IMR-90 (cell line): ENCODE measurements at regions of chr7 and their contacts with region 1.

Region 1: GRCh38 chr7:43582503-43583423 is at the start of gene STK17A:
- DNase-seq: peak; percentile 85
- ATAC-seq: peak; percentile 94
- H3K4me3 ChIP-seq: peak within 1 kb of the TSS; percentile 91
- H3K27ac ChIP-seq: peak within 1 kb of the TSS; percentile 78
- H3K4me1 ChIP-seq: no peaks in the 10 kb centered on the region; the same call in 1 of the 2 replicates
- H3K27me3 ChIP-seq: peaks cover 2% of the 10 kb centered on the region; the same call in 1 of the 2 replicates
- CTCF ChIP-seq: peak; percentile 100
- POLR2A ChIP-seq: peak; percentile 99
- RAD21 ChIP-seq: peak; percentile 97
- total RNA-seq, gene STK17A: 50.5 and 81.9 TPM in 2 replicates

Region 2: DNA sequence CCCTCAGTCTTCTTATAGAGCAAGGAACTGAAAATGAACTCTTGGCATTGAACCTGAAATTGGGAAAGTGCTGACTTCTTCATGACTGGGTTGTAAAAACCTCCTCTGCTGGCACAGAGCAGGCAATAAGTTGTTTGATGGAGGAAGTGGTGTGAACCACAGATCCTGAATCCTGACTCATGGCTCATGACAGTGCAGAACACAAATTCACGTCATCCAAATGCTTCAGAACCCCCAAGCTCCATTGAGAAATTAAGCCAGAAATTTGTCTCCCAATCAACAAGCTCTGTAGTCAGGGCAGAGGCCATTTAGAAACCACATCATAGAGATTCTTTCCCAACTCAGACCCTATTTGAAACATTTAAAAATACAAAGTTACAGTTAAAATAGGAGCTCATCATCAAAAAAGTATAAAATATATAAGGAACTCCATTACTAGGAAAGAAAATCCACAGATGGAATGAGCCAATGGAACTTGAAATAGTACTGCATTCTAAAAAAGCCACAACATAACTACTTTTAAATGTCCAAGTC is 10.2 kb before region 1 on chr7:
- CTCF ChIA-PET with region 1: interaction called, 41 read pairs
- POLR2A ChIA-PET with region 1: interaction called, 6 read pairs
- dilution Hi-C with region 1: no loop called
- in situ Hi-C with region 1: no loop called
- intact Hi-C with region 1: no loop called
- DNase-seq: peak; percentile 100
- ATAC-seq: peak; percentile 80
- H3K4me3 ChIP-seq: no peak overlapping the region
- H3K27ac ChIP-seq: peak overlapping the region; percentile 83; the same call in 1 of the 2 replicates
- H3K4me1 ChIP-seq: peaks cover 9% of the 10 kb centered on the region
- H3K27me3 ChIP-seq: no peaks in the 10 kb centered on the region
- CTCF ChIP-seq: no peak
- POLR2A ChIP-seq: no peak
- RAD21 ChIP-seq: peak; percentile 4; the same call in 1 of the 2 replicates

Region 3: GRCh38 chr7:43612599-43613589 is 30.1 kb after region 1 on chr7:
- CTCF ChIA-PET with region 1: interaction called, 12 read pairs
- POLR2A ChIA-PET with region 1: interaction called, 11 read pairs
- dilution Hi-C with region 1: no loop called
- in situ Hi-C with region 1: no loop called
- intact Hi-C with region 1: no loop called
- DNase-seq: peak; percentile 61
- ATAC-seq: peak; percentile 60
- H3K4me3 ChIP-seq: no peak overlapping the region
- H3K27ac ChIP-seq: no peak overlapping the region
- H3K4me1 ChIP-seq: peaks cover 15% of the 10 kb centered on the region
- H3K27me3 ChIP-seq: no peaks in the 10 kb centered on the region
- CTCF ChIP-seq: no peak
- POLR2A ChIP-seq: no peak
- RAD21 ChIP-seq: no peak

Region 4: GRCh38 chr7:43639858-43640491 is 57.2 kb after region 1 on chr7:
- CTCF ChIA-PET with region 1: interaction called, 12 read pairs
- POLR2A ChIA-PET with region 1: interaction called, 3 read pairs
- dilution Hi-C with region 1: no loop called
- in situ Hi-C with region 1: no loop called
- intact Hi-C with region 1: no loop called
- DNase-seq: peak; percentile 75
- ATAC-seq: peak; percentile 58
- H3K4me3 ChIP-seq: no peak overlapping the region
- H3K27ac ChIP-seq: peak overlapping the region; percentile 81; the same call in 1 of the 2 replicates
- H3K4me1 ChIP-seq: peaks cover 24% of the 10 kb centered on the region
- H3K27me3 ChIP-seq: no peaks in the 10 kb centered on the region
- CTCF ChIP-seq: no peak
- POLR2A ChIP-seq: no peak
- RAD21 ChIP-seq: no peak

Region 5: GRCh38 chr7:43693687-43694398 is 111.1 kb after region 1 on chr7:
- CTCF ChIA-PET with region 1: interaction called, 104 read pairs
- POLR2A ChIA-PET with region 1: interaction called, 23 read pairs
- dilution Hi-C with region 1: no loop called
- in situ Hi-C with region 1: no loop called
- intact Hi-C with region 1: no loop called
- DNase-seq: peak; percentile 81
- ATAC-seq: peak; percentile 43
- H3K4me3 ChIP-seq: no peak overlapping the region
- H3K27ac ChIP-seq: peak overlapping the region; percentile 61
- H3K4me1 ChIP-seq: peaks cover 19% of the 10 kb centered on the region
- H3K27me3 ChIP-seq: no peaks in the 10 kb centered on the region
- CTCF ChIP-seq: no peak
- POLR2A ChIP-seq: no peak
- RAD21 ChIP-seq: no peak

Region 6: DNA sequence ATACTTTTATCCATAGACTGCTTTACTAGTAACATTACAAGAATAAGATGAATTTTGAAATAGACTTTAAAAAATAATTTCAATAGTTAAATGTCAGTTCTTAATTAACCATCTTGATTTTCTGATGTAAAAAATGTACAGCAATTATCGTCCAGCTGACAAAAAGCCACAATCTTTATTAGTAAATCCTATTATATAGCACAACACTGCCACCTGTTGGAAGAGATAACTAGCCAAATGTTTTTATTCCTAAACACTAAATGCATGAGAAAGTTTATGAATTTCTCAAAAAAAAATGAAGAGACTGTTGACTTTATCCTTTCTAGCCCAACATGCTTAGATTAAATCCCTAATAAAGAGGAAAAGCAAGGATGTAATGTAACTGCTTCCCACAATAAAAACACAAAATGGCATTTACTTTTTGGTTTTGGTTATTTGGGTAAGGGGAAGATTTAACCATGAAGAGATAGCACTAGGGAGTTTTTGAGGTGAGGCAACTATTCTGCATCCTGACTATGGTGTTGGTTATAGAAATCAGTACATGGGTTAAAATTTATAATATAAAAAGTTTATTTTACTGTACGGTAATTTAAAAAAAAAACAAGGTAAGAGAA is 138.5 kb after region 1 on chr7:
- CTCF ChIA-PET with region 1: interaction called, 22 read pairs
- POLR2A ChIA-PET with region 1: interaction called, 3 read pairs
- dilution Hi-C with region 1: no loop called
- in situ Hi-C with region 1: no loop called
- intact Hi-C with region 1: loop called (anchors 1 kb)
- DNase-seq: peak; percentile 71
- ATAC-seq: peak; percentile 46
- H3K4me3 ChIP-seq: no peak overlapping the region
- H3K27ac ChIP-seq: no peak overlapping the region
- H3K4me1 ChIP-seq: peaks cover 3% of the 10 kb centered on the region
- H3K27me3 ChIP-seq: no peaks in the 10 kb centered on the region
- CTCF ChIP-seq: peak; percentile 75
- POLR2A ChIP-seq: no peak
- RAD21 ChIP-seq: peak; percentile 73